K562 (cell line): ENCODE measurements at regions of chr1 and their contacts with region 1.

Region 1: GRCh38 chr1:111720274-111720976 is 18.8 kb downstream of the INKA2 start:
- DNase-seq: no peak
- ATAC-seq: 0 out of 3 replicates have a peak, but pooled peaks have one; percentile 5
- H3K4me3 ChIP-seq: no peak overlapping the region
- H3K27ac ChIP-seq: no peak overlapping the region
- H3K4me1 ChIP-seq: peaks cover 3 to 5% of the 10 kb centered on the region in 2 experiments; a peak in 2 of 5 replicates
- H3K27me3 ChIP-seq: peaks cover 0 to 4% of the 10 kb centered on the region in 2 experiments; a peak in 1 of 5 replicates
- CTCF ChIP-seq: no peak
- EP300 ChIP-seq: no peak
- POLR2A ChIP-seq: no peak
- RAD21 ChIP-seq: no peak

Region 2: DNA sequence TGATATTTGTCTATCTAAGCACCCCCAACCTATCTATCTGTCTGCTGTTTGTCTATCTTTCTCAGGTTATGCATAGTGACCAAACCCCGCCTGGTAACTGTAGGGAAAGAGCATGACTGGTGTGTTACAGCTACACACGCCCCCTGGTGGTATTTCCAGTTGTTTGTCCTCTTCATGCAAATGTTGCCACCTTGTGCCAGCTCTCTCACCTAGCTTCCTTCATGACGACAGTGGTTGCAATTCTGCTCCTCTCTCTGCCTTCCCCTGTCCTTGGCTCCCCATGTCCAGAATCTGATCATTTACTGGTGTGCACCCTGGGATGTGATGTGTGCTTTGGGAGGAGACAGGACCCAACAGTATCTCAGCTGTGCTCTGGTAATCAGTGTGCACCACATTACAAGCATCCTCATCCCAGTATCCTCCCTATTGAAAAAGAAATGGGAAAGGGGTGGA is 26.9 kb after region 1 on chr1:
- CTCF ChIA-PET with region 1: interaction called, 23 read pairs
- POLR2A ChIA-PET with region 1: no interaction called
- in situ Hi-C with region 1: no loop called
- intact Hi-C with region 1: loop called (anchors 1 kb)
- DNase-seq: peak; percentile 75 to 89 (median 79)
- ATAC-seq: peak; percentile 89
- H3K4me3 ChIP-seq: no peak overlapping the region
- H3K27ac ChIP-seq: no peak overlapping the region
- H3K4me1 ChIP-seq: peaks cover 0 to 13% of the 10 kb centered on the region in 2 experiments; a peak in 2 of 5 replicates
- H3K27me3 ChIP-seq: peaks cover 10 to 25% of the 10 kb centered on the region in 2 experiments
- CTCF ChIP-seq: peak; percentile 98 to 99 (median 98)
- EP300 ChIP-seq: 0 out of 2 replicates have a peak, but pooled peaks have one; percentile 47
- POLR2A ChIP-seq: no peak
- RAD21 ChIP-seq: peak; percentile 77 to 96

Region 3: DNA sequence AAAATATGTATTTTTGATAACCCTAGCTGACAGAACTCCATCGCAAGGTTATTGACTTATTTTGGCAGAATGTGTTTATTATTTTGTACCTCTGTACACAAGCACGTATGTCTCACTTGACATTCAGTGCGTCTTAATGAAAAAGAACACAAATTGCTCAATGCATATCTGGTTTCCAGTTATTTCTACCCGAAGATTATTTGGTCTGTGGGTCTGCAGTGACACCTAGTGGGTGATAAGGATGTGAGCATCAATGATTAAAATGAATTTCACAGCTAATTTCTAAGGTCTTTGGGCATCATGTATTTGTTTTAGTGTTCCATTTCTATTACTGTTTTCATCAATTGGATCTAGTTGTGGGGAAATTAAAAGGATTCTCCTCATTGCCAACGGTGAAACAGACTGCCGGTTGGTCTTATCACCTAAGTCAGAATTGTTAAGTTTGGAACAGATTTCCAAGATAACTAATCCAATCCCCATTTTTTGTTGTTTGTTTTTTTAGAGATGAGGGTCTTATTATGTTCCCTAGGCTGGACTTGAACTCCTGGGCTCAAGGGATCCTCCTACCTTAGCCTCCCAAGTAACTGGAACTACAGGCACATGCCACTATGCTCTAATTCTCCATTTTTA is 49.2 kb after region 1 on chr1:
- CTCF ChIA-PET with region 1: interaction called, 61 read pairs
- POLR2A ChIA-PET with region 1: interaction called, 3 read pairs
- in situ Hi-C with region 1: no loop called
- intact Hi-C with region 1: no loop called
- DNase-seq: peak; percentile 65 to 80 (median 68)
- ATAC-seq: peak; percentile 76
- H3K4me3 ChIP-seq: no peak overlapping the region
- H3K27ac ChIP-seq: no peak overlapping the region
- H3K4me1 ChIP-seq: no peaks in the 10 kb centered on the region
- H3K27me3 ChIP-seq: peaks cover 2 to 6% of the 10 kb centered on the region in 2 experiments; a peak in 3 of 5 replicates
- CTCF ChIP-seq: peak; percentile 68 to 96 (median 82)
- EP300 ChIP-seq: no peak
- POLR2A ChIP-seq: no peak; the same call in 1 of the 2 replicates
- RAD21 ChIP-seq: peak; percentile 94 to 95

Region 4: GRCh38 chr1:111927652-111928051 is 207.2 kb after region 1 on chr1:
- CTCF ChIA-PET with region 1: no interaction called
- POLR2A ChIA-PET with region 1: no interaction called
- in situ Hi-C with region 1: no loop called
- intact Hi-C with region 1: no loop called
- DNase-seq: no peak
- ATAC-seq: no peak
- H3K4me3 ChIP-seq: no peak overlapping the region
- H3K27ac ChIP-seq: no peak overlapping the region
- H3K4me1 ChIP-seq: no peaks in the 10 kb centered on the region
- H3K27me3 ChIP-seq: peaks cover 0 to 23% of the 10 kb centered on the region in 2 experiments; a peak in 2 of 5 replicates
- CTCF ChIP-seq: no peak
- EP300 ChIP-seq: no peak
- POLR2A ChIP-seq: no peak
- RAD21 ChIP-seq: no peak

Region 5: DNA sequence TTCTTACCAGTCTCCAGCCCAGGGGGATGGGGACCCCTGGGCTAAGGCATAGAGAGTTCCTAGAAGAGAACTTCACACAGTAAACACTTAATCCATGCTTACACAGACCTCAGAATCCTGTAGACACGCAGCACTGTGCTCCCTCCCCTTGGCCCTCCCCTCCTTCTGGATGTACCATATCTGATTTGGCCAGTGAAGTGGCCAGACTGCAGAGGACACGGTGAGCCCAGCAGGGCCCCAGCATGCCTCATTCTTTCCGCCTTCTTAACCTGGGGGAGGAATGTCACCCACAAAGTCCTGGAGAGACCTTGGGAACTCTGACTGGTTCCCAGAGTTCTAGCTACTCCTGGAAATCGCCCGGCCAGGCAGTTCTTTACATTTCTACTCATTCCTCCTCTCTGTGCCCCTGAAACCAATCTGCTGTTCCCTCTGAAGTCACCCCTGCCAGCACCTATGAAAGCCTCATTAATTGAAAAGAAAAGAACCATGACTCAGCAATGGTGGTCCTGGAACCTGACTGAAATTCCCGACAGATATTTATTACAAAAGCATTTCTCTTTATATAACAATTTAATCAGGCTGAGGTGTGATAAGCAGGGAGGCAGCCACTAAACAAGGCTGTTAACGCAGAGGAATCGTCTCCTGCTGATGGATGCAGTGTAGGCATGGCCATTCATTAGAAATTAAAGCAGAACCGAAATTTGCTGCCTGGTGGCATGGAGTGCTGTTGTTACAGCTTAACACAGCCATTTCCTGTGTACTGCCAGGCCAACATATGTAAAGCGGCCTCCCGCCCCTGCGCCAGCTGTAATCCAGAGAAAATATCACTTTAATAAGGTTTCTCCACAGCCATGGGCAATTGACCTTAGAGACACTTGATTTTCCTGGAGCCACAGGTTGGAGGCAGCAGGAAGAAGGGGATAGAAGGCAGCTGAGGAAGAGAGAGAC is 343.6 kb after region 1 on chr1:
- CTCF ChIA-PET with region 1: no interaction called
- POLR2A ChIA-PET with region 1: no interaction called
- in situ Hi-C with region 1: no loop called
- intact Hi-C with region 1: no loop called
- DNase-seq: no peak
- ATAC-seq: peak; percentile 37; the same call in 2 of the 3 replicates
- H3K4me3 ChIP-seq: no peak overlapping the region
- H3K27ac ChIP-seq: no peak overlapping the region
- H3K4me1 ChIP-seq: no peaks in the 10 kb centered on the region
- H3K27me3 ChIP-seq: 0 out of 5 replicates have a peak, but pooled peaks cover 0 to 7% of the 10 kb centered on the region in 2 experiments
- CTCF ChIP-seq: no peak
- EP300 ChIP-seq: no peak
- POLR2A ChIP-seq: no peak
- RAD21 ChIP-seq: no peak